GM12878 (cell line): ENCODE measurements at regions of chr14 and their contacts with region 1.

Region 1: GRCh38 chr14:24431569-24432258 is 2.0 kb downstream of the KHNYN start:
- DNase-seq: peak; percentile 76
- ATAC-seq: peak; percentile 79
- H3K4me3 ChIP-seq: peak overlapping the region; percentile 93
- H3K27ac ChIP-seq: peak overlapping the region; percentile 92
- H3K4me1 ChIP-seq: peaks cover 13% of the 10 kb centered on the region
- H3K27me3 ChIP-seq: no peaks in the 10 kb centered on the region
- CTCF ChIP-seq: peak; percentile 95 to 98 (median 98)
- EP300 ChIP-seq: 0 out of 4 replicates have a peak, but pooled peaks of 1 of the 2 experiments have one; percentile 10
- POLR2A ChIP-seq: peak; percentile 45
- RAD21 ChIP-seq: peak; percentile 91

Region 2: GRCh38 chr14:24241829-24242443 is 189.8 kb before region 1 on chr14:
- CTCF ChIA-PET with region 1: interaction called, 24 read pairs
- POLR2A ChIA-PET with region 1: interaction called, 10 read pairs
- RAD21 ChIA-PET with region 1: interaction called, 14 read pairs
- SMC1A ChIA-PET with region 1: interaction called, 17 read pairs
- in situ Hi-C with region 1: loop called (anchors 5 kb)
- intact Hi-C with region 1: loop called (anchors 2 kb)
- DNase-seq: no peak
- ATAC-seq: peak; percentile 90
- H3K4me3 ChIP-seq: peak overlapping the region; percentile 80
- H3K27ac ChIP-seq: peak overlapping the region; percentile 99
- H3K4me1 ChIP-seq: peaks cover 16% of the 10 kb centered on the region
- H3K27me3 ChIP-seq: no peaks in the 10 kb centered on the region
- CTCF ChIP-seq: peak; percentile 17 to 52 (median 19); a peak in 3 of 6 replicates
- EP300 ChIP-seq: no peak
- POLR2A ChIP-seq: no peak
- RAD21 ChIP-seq: no peak

Region 3: GRCh38 chr14:24310646-24311604 is 120.8 kb before region 1 on chr14 and contains the start of gene LTB4R:
- CTCF ChIA-PET with region 1: interaction called, 58 read pairs
- POLR2A ChIA-PET with region 1: interaction called, 3 read pairs
- RAD21 ChIA-PET with region 1: interaction called, 19 read pairs
- SMC1A ChIA-PET with region 1: interaction called, 7 read pairs
- in situ Hi-C with region 1: no loop called
- intact Hi-C with region 1: no loop called
- DNase-seq: no peak
- ATAC-seq: peak; percentile 75
- H3K4me3 ChIP-seq: peak within 1 kb of the TSS; percentile 47
- H3K27ac ChIP-seq: peak within 1 kb of the TSS; percentile 45; the same call in 1 of the 2 replicates
- H3K4me1 ChIP-seq: peaks cover 37% of the 10 kb centered on the region
- H3K27me3 ChIP-seq: no peaks in the 10 kb centered on the region
- CTCF ChIP-seq: peak; percentile 10 to 40 (median 29); a peak in 3 of 6 replicates
- EP300 ChIP-seq: no peak
- POLR2A ChIP-seq: peak; percentile 54; the same call in 1 of the 2 replicates
- RAD21 ChIP-seq: no peak
- polyA plus RNA-seq, gene LTB4R: 1.2 to 1.7 TPM

Region 4: GRCh38 chr14:24332268-24332993 is 99.3 kb before region 1 on chr14:
- CTCF ChIA-PET with region 1: interaction called, 452 read pairs
- POLR2A ChIA-PET with region 1: interaction called, 42 read pairs
- RAD21 ChIA-PET with region 1: interaction called, 141 read pairs
- SMC1A ChIA-PET with region 1: interaction called, 77 read pairs
- in situ Hi-C with region 1: loop called (anchors 5 kb)
- intact Hi-C with region 1: loop called (anchors 1 kb)
- DNase-seq: peak; percentile 60
- ATAC-seq: peak; percentile 88
- H3K4me3 ChIP-seq: peak overlapping the region; percentile 35; the same call in 1 of the 2 replicates
- H3K27ac ChIP-seq: no peak overlapping the region
- H3K4me1 ChIP-seq: peaks cover 18% of the 10 kb centered on the region
- H3K27me3 ChIP-seq: peaks cover 2 to 12% of the 10 kb centered on the region in 2 experiments; a peak in 3 of 4 replicates
- CTCF ChIP-seq: peak; percentile 80 to 86 (median 85)
- EP300 ChIP-seq: no peak
- POLR2A ChIP-seq: no peak
- RAD21 ChIP-seq: peak; percentile 73

Region 5: GRCh38 chr14:24372701-24373416 is 58.9 kb before region 1 on chr14:
- CTCF ChIA-PET with region 1: interaction called, 21 read pairs
- POLR2A ChIA-PET with region 1: interaction called, 13 read pairs
- RAD21 ChIA-PET with region 1: interaction called, 7 read pairs
- SMC1A ChIA-PET with region 1: interaction called, 8 read pairs
- in situ Hi-C with region 1: loop called (anchors 5 kb)
- intact Hi-C with region 1: no loop called
- DNase-seq: no peak
- ATAC-seq: no peak
- H3K4me3 ChIP-seq: no peak overlapping the region
- H3K27ac ChIP-seq: no peak overlapping the region
- H3K4me1 ChIP-seq: no peaks in the 10 kb centered on the region
- H3K27me3 ChIP-seq: peaks cover 0 to 6% of the 10 kb centered on the region in 2 experiments; a peak in 3 of 4 replicates
- CTCF ChIP-seq: no peak
- EP300 ChIP-seq: no peak
- POLR2A ChIP-seq: no peak
- RAD21 ChIP-seq: no peak

Region 6: GRCh38 chr14:24418492-24418873 is 13.2 kb before region 1 on chr14:
- CTCF ChIA-PET with region 1: interaction called, 20 read pairs
- POLR2A ChIA-PET with region 1: interaction called, 4 read pairs
- RAD21 ChIA-PET with region 1: interaction called, 10 read pairs
- SMC1A ChIA-PET with region 1: interaction called, 14 read pairs
- in situ Hi-C with region 1: no loop called
- intact Hi-C with region 1: no loop called
- DNase-seq: no peak
- ATAC-seq: no peak
- H3K4me3 ChIP-seq: no peak overlapping the region
- H3K27ac ChIP-seq: no peak overlapping the region
- H3K4me1 ChIP-seq: no peaks in the 10 kb centered on the region
- H3K27me3 ChIP-seq: no peaks in the 10 kb centered on the region; a peak in 2 of 4 replicates
- CTCF ChIP-seq: no peak
- EP300 ChIP-seq: no peak
- POLR2A ChIP-seq: no peak
- RAD21 ChIP-seq: no peak